ENCODE measurements at regions of chr22 and their contacts with region 1.

Region 1: DNA sequence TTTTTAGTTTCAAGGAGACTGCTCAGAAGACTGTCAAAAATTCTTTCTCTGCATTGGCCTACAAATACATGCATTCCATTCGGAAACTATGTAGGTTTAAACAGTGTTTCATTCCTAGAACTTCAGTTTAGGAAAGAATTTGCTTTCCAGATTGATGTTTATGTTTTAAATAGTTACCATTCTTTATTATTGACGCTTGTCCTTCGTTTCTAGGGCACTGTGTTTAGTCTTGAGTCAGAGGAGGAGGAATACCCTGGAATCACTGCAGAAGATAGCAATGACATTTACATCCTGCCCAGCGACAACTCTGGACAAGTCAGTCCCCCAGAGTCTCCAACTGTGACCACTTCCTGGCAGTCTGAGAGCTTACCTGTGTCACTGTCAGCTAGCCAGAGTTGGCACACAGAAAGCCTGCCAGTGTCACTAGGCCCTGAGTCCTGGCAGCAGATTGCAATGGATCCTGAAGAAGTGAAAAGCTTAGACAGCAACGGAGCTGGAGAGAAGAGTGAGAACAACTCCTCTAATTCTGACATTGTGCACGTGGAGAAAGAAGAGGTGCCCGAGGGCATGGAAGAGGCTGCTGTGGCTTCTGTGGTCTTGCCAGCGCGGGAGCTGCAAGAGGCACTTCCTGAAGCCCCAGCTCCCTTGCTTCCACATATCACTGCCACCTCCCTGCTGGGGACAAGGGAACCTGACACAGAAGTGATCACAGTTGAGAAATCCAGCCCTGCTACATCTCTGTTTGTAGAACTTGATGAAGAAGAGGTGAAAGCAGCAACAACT is 47.6 kb downstream of the BID start:
- DNase-seq: no peak
- H3K4me3 ChIP-seq: no peak overlapping the region
- H3K27ac ChIP-seq: no peak overlapping the region
- H3K4me1 ChIP-seq: peaks cover 14% of the 10 kb centered on the region
- H3K27me3 ChIP-seq: no peaks in the 10 kb centered on the region
- CTCF ChIP-seq: no peak

Region 2: DNA sequence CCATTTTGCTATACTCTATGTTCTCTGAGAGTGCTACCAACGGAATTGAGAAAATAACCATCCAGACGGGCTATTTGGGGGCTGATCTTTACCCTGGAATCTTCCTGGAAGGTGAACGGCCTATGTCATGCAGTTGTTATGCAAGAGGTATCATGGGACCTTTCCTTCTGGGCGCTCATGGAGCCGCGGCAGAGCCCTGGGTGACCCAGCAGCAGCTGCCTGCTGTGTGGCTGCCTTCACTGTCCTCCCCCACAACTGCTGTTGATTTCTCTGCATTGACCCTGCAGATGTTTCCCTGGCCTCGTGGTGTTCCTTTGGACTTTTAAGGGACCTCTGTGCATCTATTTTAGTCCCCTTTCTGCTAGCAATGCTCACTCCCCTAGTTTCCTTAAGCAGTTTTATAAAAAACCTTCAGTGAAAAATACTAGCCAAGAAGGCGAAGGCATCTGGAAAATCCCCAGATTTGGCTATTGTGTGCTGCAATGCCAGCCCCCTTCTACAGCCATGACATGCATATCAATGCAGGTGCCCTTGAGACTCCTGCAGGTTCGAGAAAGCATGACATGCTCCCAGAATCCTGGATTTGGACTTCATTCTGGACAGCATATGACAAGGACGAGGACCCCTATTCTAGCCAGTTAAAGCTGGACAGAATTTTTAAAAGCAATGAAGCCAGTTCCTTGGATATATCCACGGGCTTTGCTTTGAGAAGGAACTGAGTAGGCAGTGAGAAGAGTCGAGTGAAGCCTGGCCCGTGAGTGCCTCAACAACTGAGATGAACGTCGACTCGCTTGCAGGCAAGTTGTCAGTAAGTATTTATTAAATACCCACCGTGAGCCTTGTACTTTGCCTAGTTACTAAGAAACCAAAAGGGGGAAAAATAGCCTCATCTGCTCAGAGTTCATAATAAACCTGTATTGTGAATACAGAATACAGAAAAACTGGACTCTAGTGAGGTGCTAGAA is 163.5 kb before region 1 on chr22 and contains the start of gene SLC25A18:
- CTCF ChIA-PET with region 1: no interaction called
- dilution Hi-C with region 1: no loop called
- in situ Hi-C with region 1: loop called in 1 of 2 experiments (anchors 25 kb)
- intact Hi-C with region 1: loop called (anchors 2 kb)
- DNase-seq: no peak
- H3K4me3 ChIP-seq: no peak within 1 kb of the TSS
- H3K27ac ChIP-seq: no peak within 1 kb of the TSS
- H3K4me1 ChIP-seq: no peaks in the 10 kb centered on the region
- H3K27me3 ChIP-seq: peaks cover 2% of the 10 kb centered on the region
- CTCF ChIP-seq: no peak
- total RNA-seq, gene SLC25A18: 0.33 TPM in 1 of 2 donors, not detected in the other

Region 3: DNA sequence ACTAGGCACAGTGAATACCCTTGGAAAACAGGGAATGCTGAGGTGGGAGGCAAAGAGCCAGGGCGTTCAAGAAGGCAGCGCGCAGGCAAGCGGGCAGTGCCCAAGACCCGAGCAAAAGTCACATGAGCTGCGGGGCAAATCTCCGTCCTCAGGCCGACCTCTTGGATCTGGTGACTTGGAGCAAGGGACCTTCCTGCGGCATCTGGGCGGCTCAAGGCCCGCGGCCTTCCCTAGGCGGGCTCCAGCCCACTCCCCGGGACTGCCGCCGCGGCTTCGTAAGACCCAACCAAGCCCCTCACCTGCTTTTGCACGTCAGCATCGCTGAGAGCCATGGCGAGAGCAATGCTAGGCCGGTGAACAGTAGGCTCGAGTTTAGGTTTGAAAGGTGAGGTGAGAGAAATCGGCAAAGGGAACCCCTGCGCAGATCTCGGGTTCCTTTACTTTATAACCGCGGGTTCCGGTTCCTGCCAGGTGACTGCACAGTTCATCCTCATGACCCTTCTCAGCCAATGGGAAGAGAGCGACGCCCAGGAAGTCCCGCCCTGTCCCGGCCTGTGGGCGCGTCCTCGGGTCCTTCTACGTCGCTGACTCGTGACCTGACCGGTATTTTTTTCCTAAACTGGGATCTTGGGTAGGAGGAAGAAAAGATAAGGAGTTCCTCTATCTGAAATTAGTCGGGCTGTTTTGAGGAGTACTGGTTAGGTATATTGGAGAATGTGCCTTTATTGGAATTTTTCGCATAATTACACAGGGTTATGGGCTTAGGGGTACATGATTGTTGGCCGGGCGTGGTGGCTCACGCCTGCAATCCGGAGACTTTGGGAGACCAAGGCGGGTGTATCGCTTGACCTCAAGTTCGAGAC is 98.1 kb before region 1 on chr22 and contains the start of gene ATP6V1E1:
- CTCF ChIA-PET with region 1: no interaction called
- dilution Hi-C with region 1: no loop called
- in situ Hi-C with region 1: no loop called
- intact Hi-C with region 1: loop called (anchors 2 kb)
- DNase-seq: peak; percentile 96
- H3K4me3 ChIP-seq: peak within 1 kb of the TSS; percentile 69 to 97 (median 93)
- H3K27ac ChIP-seq: peak within 1 kb of the TSS; percentile 97
- H3K4me1 ChIP-seq: peaks cover 21% of the 10 kb centered on the region
- H3K27me3 ChIP-seq: no peaks in the 10 kb centered on the region
- CTCF ChIP-seq: no peak
- total RNA-seq, gene ATP6V1E1: 118 to 148 TPM

Region 4: GRCh38 chr22:17678872-17679271 is 47.8 kb before region 1 on chr22:
- CTCF ChIA-PET with region 1: no interaction called
- dilution Hi-C with region 1: loop called (anchors 5 kb)
- in situ Hi-C with region 1: no loop called
- intact Hi-C with region 1: no loop called
- DNase-seq: no peak
- H3K4me3 ChIP-seq: no peak overlapping the region
- H3K27ac ChIP-seq: no peak overlapping the region
- H3K4me1 ChIP-seq: no peaks in the 10 kb centered on the region
- H3K27me3 ChIP-seq: no peaks in the 10 kb centered on the region
- CTCF ChIP-seq: no peak

Region 5: GRCh38 chr22:17692841-17693240 is 33.8 kb before region 1 on chr22:
- CTCF ChIA-PET with region 1: no interaction called
- dilution Hi-C with region 1: no loop called
- in situ Hi-C with region 1: no loop called
- intact Hi-C with region 1: no loop called
- DNase-seq: no peak
- H3K4me3 ChIP-seq: no peak overlapping the region
- H3K27ac ChIP-seq: no peak overlapping the region
- H3K4me1 ChIP-seq: no peaks in the 10 kb centered on the region
- H3K27me3 ChIP-seq: no peaks in the 10 kb centered on the region
- CTCF ChIP-seq: no peak

Region 6: GRCh38 chr22:17767233-17768065 is 40.8 kb after region 1 on chr22:
- CTCF ChIA-PET with region 1: no interaction called
- dilution Hi-C with region 1: no loop called
- in situ Hi-C with region 1: no loop called
- intact Hi-C with region 1: no loop called
- DNase-seq: peak; percentile 27
- H3K4me3 ChIP-seq: no peak overlapping the region
- H3K27ac ChIP-seq: no peak overlapping the region
- H3K4me1 ChIP-seq: peaks cover under 1% of the 10 kb centered on the region
- H3K27me3 ChIP-seq: no peaks in the 10 kb centered on the region
- CTCF ChIP-seq: no peak

Region 7: DNA sequence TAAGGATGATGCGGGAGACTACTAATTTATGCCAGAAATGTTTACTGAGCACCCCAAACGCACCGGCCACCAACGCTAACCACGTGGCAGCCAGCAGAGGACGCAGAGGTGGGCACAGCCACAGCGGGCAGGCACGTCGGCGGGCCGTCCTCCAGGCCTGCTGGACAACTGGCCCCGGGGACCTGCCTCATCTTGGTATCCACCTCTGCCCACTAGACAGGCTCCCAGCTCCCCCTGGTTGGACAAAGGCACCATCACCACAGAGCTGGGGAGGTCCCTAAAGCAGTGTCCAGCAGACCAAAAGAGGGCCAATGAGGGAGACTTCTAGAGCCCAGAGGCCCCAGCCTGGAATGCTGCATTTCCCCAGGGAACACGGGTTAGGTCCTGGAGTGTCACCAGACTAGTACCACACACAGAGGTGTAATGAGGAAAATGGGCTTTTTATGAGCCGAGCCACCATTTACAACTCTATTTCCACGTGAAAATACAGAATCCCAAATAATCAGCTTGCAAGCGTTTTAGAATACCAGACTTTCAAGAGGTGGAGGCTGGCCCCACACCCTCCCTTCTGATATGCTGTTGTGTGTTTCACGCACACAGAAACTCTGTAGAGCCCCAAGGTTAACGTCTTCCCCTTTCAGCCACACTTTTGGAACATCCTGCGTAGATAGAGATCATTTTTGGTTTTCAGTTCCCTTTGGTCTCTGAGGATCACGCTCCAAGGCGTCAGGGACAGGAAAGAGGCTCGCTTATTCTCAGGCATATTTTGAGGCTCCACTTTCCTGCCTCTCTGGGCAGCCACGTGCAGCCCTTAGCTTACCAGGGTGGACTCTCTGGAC is 71.3 kb after region 1 on chr22:
- CTCF ChIA-PET with region 1: no interaction called
- dilution Hi-C with region 1: no loop called
- in situ Hi-C with region 1: no loop called
- intact Hi-C with region 1: no loop called
- DNase-seq: no peak
- H3K4me3 ChIP-seq: no peak overlapping the region
- H3K27ac ChIP-seq: no peak overlapping the region
- H3K4me1 ChIP-seq: no peaks in the 10 kb centered on the region
- H3K27me3 ChIP-seq: no peaks in the 10 kb centered on the region
- CTCF ChIP-seq: no peak

Region 8: GRCh38 chr22:17824457-17824856 is 97.8 kb after region 1 on chr22:
- CTCF ChIA-PET with region 1: no interaction called
- dilution Hi-C with region 1: loop called (anchors 5 kb)
- in situ Hi-C with region 1: no loop called
- intact Hi-C with region 1: no loop called
- DNase-seq: no peak
- H3K4me3 ChIP-seq: no peak overlapping the region
- H3K27ac ChIP-seq: no peak overlapping the region
- H3K4me1 ChIP-seq: peaks cover 2% of the 10 kb centered on the region
- H3K27me3 ChIP-seq: no peaks in the 10 kb centered on the region
- CTCF ChIP-seq: no peak